PC-9 (cell line): ENCODE measurements at regions of chr7 and their contacts with region 1.

Region 1: GRCh38 chr7:39948956-39949928 is 814 bp upstream of the CDK13 start:
- DNase-seq: peak; percentile 100
- H3K4me3 ChIP-seq: peak overlapping the region; percentile 76
- H3K27ac ChIP-seq: peak overlapping the region; percentile 94
- H3K4me1 ChIP-seq: peaks cover 21% of the 10 kb centered on the region
- H3K27me3 ChIP-seq: no peaks in the 10 kb centered on the region
- CTCF ChIP-seq: no peak

Region 2: GRCh38 chr7:39580149-39580874 is 368.9 kb before region 1 on chr7:
- CTCF ChIA-PET with region 1: interaction called, 3 read pairs
- POLR2A ChIA-PET with region 1: no interaction called
- intact Hi-C with region 1: loop called (anchors 10 kb)
- DNase-seq: peak; percentile 75 to 81
- H3K4me3 ChIP-seq: no peak overlapping the region
- H3K27ac ChIP-seq: no peak overlapping the region
- H3K4me1 ChIP-seq: no peaks in the 10 kb centered on the region
- H3K27me3 ChIP-seq: no peaks in the 10 kb centered on the region
- CTCF ChIP-seq: peak; percentile 97

Region 3: GRCh38 chr7:39732837-39733804 is 216.1 kb before region 1 on chr7:
- CTCF ChIA-PET with region 1: no interaction called
- POLR2A ChIA-PET with region 1: no interaction called
- intact Hi-C with region 1: loop called (anchors 5 kb)
- DNase-seq: peak; percentile 81 to 86
- H3K4me3 ChIP-seq: peak overlapping the region; percentile 61
- H3K27ac ChIP-seq: peak overlapping the region; percentile 64
- H3K4me1 ChIP-seq: peaks cover 17% of the 10 kb centered on the region
- H3K27me3 ChIP-seq: no peaks in the 10 kb centered on the region
- CTCF ChIP-seq: no peak

Region 4: DNA sequence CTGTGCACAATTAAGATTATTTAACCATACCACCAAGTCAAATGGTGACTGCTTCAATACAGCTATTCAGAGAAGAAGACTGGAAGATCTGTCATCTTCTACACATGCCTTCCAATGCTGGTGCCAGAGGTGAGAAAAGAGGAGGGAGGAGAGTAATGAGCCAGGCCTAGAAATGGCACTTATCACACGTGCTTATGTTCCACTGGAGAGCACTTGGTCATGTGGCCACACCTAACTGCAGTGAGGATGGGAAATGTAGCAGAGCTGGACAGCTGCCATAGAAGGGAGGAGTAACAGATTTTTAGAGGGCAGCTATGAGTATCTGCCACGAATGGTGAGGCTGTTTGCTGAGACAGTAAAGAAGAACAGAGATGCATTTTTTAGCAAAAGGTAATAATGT is 108.0 kb after region 1 on chr7:
- CTCF ChIA-PET with region 1: no interaction called
- POLR2A ChIA-PET with region 1: no interaction called
- intact Hi-C with region 1: loop called (anchors 2 kb)
- DNase-seq: no peak
- H3K4me3 ChIP-seq: no peak overlapping the region
- H3K27ac ChIP-seq: no peak overlapping the region
- H3K4me1 ChIP-seq: no peaks in the 10 kb centered on the region
- H3K27me3 ChIP-seq: no peaks in the 10 kb centered on the region
- CTCF ChIP-seq: no peak

Region 5: DNA sequence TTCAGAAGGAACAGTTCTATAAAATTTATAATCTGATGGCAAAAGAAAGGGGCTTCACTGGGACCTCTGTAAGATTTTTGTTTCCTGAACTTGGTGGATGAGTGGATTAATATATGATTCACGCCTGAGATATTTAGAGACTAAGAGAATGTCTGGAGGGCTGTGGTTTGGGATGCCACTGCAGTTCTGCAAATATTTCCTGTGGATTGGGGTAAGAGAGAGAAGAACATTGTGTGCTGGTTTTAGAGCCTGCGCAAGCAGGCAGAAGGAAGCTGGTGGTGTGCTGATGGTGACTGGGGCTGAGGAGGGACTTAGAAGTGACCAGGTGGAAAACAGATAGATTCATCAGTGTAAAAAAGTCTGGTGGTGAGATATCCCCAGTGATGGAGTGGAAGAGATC is 272.6 kb after region 1 on chr7:
- CTCF ChIA-PET with region 1: no interaction called
- POLR2A ChIA-PET with region 1: no interaction called
- intact Hi-C with region 1: loop called (anchors 5 kb)
- DNase-seq: peak in 1 of 2 experiments; percentile 49
- H3K4me3 ChIP-seq: no peak overlapping the region
- H3K27ac ChIP-seq: no peak overlapping the region
- H3K4me1 ChIP-seq: peaks cover 17% of the 10 kb centered on the region
- H3K27me3 ChIP-seq: no peaks in the 10 kb centered on the region
- CTCF ChIP-seq: no peak